Prostate gland (tissue), 2 donors: ENCODE measurements at regions of chr18 and their contacts with region 1.

Region 1: DNA sequence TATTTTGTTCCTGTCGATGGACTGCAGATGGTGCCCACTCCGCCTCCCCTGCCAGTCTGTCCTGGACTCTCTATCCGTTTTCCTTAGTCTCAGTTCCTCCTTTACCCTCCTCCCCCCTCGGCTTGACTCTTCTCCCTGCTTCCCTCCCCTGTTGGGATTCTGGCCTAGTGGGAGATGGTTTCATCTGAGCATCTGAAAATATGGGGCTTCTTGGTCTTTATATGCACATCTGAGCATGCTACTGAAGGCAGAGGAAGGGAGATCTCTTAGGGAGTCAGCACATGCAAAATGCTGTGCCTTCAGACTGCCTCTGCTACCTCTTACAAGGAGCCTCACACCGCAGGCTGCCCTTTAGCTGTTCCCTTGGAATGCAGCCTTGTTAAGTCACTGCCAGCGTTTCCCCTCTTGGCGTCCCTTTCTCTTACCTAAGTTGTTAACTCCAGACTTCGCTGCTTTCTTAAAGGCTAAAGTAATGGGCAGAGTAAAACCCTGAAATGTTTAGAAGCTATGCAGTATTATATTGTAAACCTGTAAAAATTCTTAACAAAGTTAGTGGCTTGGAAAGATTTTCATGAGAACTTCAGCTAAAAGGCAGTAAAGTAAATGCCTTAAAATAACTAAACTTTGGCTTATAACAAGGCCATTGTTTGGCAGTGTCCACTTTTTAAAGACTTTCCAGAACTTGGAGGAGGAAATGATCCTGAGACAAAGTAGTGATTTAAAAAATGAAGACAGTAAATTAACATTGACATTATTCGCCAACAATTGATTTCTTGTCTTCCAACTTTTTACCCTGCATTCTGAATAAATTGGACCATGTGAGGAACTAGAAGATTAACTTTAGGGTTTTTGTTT is 49.8 kb downstream of the LDLRAD4 start:
- DNase-seq: peak; percentile 55
- H3K4me3 ChIP-seq: no peak overlapping the region
- H3K27ac ChIP-seq: peak overlapping the region; percentile 40 to 51
- H3K4me1 ChIP-seq: peaks cover 23% of the 10 kb centered on the region
- H3K27me3 ChIP-seq: no peaks in the 10 kb centered on the region
- CTCF ChIP-seq: no peak
- POLR2A ChIP-seq: no peak

Region 2: GRCh38 chr18:12737243-12737902 is 531.0 kb before region 1 on chr18:
- intact Hi-C with region 1: no loop called
- DNase-seq: no peak
- H3K4me3 ChIP-seq: no peak overlapping the region
- H3K27ac ChIP-seq: no peak overlapping the region
- H3K4me1 ChIP-seq: no peaks in the 10 kb centered on the region
- H3K27me3 ChIP-seq: no peaks in the 10 kb centered on the region
- CTCF ChIP-seq: no peak
- POLR2A ChIP-seq: no peak

Region 3: GRCh38 chr18:13221869-13222855 is 46.2 kb before region 1 on chr18:
- intact Hi-C with region 1: loop called (anchors 2 kb)
- DNase-seq: peak; percentile 67
- H3K4me3 ChIP-seq: no peak overlapping the region
- H3K27ac ChIP-seq: peak overlapping the region; percentile 29 to 38
- H3K4me1 ChIP-seq: peaks cover 24% of the 10 kb centered on the region
- H3K27me3 ChIP-seq: no peaks in the 10 kb centered on the region
- CTCF ChIP-seq: no peak
- POLR2A ChIP-seq: no peak

Region 4: GRCh38 chr18:13435596-13436327 is 167.4 kb after region 1 on chr18:
- intact Hi-C with region 1: loop called (anchors 10 kb)
- DNase-seq: no peak
- H3K4me3 ChIP-seq: no peak overlapping the region
- H3K27ac ChIP-seq: peak overlapping the region in 1 of 2 donors; percentile 43
- H3K4me1 ChIP-seq: no peaks in the 10 kb centered on the region
- H3K27me3 ChIP-seq: no peaks in the 10 kb centered on the region
- CTCF ChIP-seq: no peak
- POLR2A ChIP-seq: no peak

Region 5: DNA sequence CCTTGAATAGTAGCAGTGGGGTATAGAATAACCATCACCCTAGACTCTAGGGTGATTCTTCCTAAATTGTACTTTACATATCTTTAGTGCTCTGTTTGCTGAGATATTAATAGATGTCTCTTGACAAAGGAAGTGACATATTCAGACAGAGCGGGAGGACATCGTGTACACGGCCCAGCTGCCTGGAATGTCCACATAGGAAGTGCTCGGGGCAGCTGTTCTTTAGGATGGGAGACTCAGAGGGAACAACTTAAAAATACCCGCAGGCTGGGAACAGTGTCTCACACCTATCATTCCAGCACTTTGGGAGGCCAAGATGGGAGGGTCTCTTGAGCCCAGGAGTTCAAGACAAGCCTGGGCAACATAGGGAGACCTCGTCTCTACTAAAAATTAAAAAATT is 251.9 kb after region 1 on chr18:
- intact Hi-C with region 1: loop called (anchors 10 kb)
- DNase-seq: no peak
- H3K4me3 ChIP-seq: no peak overlapping the region
- H3K27ac ChIP-seq: no peak overlapping the region
- H3K4me1 ChIP-seq: no peaks in the 10 kb centered on the region
- H3K27me3 ChIP-seq: no peaks in the 10 kb centered on the region
- CTCF ChIP-seq: no peak
- POLR2A ChIP-seq: no peak